ENCODE measurements at regions of chr3 and their contacts with region 1.

Region 1: GRCh38 chr3:98741121-98741716 is 21.9 kb upstream of the ST3GAL6 start:
- DNase-seq: no peak
- ATAC-seq: no peak
- H3K4me3 ChIP-seq: no peak overlapping the region
- H3K27ac ChIP-seq: no peak overlapping the region
- H3K4me1 ChIP-seq: peaks cover 9% of the 10 kb centered on the region
- H3K27me3 ChIP-seq: no peaks in the 10 kb centered on the region
- CTCF ChIP-seq: no peak
- EP300 ChIP-seq: no peak
- POLR2A ChIP-seq: no peak
- RAD21 ChIP-seq: no peak

Region 2: DNA sequence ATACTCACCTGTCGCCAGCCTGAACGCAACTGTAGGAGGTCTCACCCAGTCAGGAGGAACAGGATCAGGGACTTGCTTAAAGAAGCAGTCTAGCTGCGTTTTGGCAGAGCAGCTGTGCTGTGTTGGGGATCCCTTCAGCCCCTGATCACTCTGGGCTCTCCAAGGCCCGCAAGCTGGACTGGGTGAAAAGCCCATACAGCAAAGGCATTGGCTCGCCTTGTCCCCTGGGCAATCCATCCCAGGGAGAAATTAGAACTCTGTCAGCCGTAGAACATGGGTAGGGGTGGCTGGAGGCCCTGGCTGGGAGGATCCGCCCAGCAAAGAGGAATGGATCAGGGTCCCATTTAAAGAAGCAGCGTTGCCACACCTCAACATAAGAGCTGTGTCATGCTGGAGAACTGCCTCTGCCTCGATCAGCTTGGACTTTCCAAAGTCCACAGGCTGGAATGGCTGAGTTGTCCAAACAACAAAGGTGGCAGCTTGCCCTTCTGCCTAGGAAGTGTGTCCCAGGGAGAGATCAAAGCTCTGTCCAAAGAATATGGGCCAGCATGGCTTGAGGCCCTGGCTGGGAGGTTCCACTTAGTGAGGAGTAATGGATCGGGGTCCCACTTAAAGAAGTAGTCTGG is 449.8 kb before region 1 on chr3:
- CTCF ChIA-PET with region 1: no interaction called
- POLR2A ChIA-PET with region 1: no interaction called
- RAD21 ChIA-PET with region 1: no interaction called
- SMC1A ChIA-PET with region 1: no interaction called
- in situ Hi-C with region 1: no loop called
- intact Hi-C with region 1: no loop called
- DNase-seq: no peak
- ATAC-seq: no peak
- H3K4me3 ChIP-seq: no peak overlapping the region
- H3K27ac ChIP-seq: no peak overlapping the region
- H3K4me1 ChIP-seq: no peaks in the 10 kb centered on the region
- H3K27me3 ChIP-seq: no peaks in the 10 kb centered on the region
- CTCF ChIP-seq: no peak
- EP300 ChIP-seq: no peak
- POLR2A ChIP-seq: no peak
- RAD21 ChIP-seq: no peak

Region 3: GRCh38 chr3:98763076-98763475 is 21.9 kb after region 1 on chr3 and contains the start of gene ST3GAL6:
- CTCF ChIA-PET with region 1: interaction called, 5 read pairs
- POLR2A ChIA-PET with region 1: interaction called, 8 read pairs
- RAD21 ChIA-PET with region 1: interaction called, 12 read pairs
- SMC1A ChIA-PET with region 1: interaction called, 139 read pairs
- in situ Hi-C with region 1: no loop called
- intact Hi-C with region 1: no loop called
- DNase-seq: no peak
- ATAC-seq: peak; percentile 67
- H3K4me3 ChIP-seq: peak within 1 kb of the TSS; percentile 35; the same call in 1 of the 2 replicates
- H3K27ac ChIP-seq: peak within 1 kb of the TSS; percentile 5; the same call in 1 of the 2 replicates
- H3K4me1 ChIP-seq: peaks cover 29% of the 10 kb centered on the region
- H3K27me3 ChIP-seq: no peaks in the 10 kb centered on the region
- CTCF ChIP-seq: no peak
- EP300 ChIP-seq: no peak
- POLR2A ChIP-seq: 0 out of 2 replicates have a peak, but pooled peaks have one; percentile 34
- RAD21 ChIP-seq: no peak
- polyA plus RNA-seq, gene ST3GAL6: 19.5 to 31.4 TPM

Region 4: DNA sequence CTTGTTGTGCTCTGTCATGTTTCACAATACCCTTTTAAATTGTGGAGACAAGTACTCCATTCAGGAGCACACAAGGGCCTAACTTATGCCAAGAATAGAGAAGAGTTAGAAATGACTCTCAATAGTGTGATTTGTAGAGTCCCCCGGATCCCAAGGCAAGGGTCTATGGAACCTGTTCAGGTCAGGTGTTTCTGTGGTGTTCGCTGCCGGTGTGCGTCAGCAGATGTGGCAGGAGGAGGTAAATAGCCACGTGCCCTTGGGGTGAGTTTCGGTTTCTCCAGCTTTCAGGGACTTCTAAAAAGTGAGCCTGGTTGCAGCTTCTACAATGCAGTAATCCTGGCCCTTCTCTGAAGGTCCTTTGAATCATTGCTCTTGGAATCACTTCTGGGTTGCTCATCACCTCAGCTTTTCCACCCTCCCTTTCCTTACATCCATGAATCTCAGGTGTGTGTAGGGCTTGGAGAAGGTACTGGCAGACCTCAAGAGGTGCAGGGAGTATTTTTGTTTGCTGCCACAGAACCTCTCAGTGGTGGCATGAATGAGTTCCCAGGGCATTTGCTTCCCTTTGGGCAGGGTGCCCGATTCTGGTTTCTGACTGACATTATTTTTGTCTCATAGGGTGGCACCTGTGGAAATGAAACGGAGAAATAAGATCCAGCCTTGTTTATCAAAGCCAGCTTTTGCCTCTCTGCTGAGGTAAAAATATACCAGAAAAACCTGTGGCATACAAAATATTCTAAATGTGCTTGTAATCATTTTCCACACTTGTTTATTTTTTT is 29.2 kb after region 1 on chr3:
- CTCF ChIA-PET with region 1: interaction called, 5 read pairs
- POLR2A ChIA-PET with region 1: interaction called, 6 read pairs
- RAD21 ChIA-PET with region 1: interaction called, 10 read pairs
- SMC1A ChIA-PET with region 1: interaction called, 29 read pairs
- in situ Hi-C with region 1: no loop called
- intact Hi-C with region 1: no loop called
- DNase-seq: peak; percentile 53
- ATAC-seq: peak; percentile 95
- H3K4me3 ChIP-seq: 0 out of 2 replicates have a peak overlapping the region, but pooled peaks have one; percentile 5
- H3K27ac ChIP-seq: peak overlapping the region; percentile 62
- H3K4me1 ChIP-seq: peaks cover 10% of the 10 kb centered on the region
- H3K27me3 ChIP-seq: no peaks in the 10 kb centered on the region
- CTCF ChIP-seq: no peak
- EP300 ChIP-seq: peak; percentile 68 to 79; a peak in 3 of 4 replicates
- POLR2A ChIP-seq: no peak
- RAD21 ChIP-seq: no peak

Region 5: GRCh38 chr3:98798820-98799219 is 57.6 kb after region 1 on chr3:
- CTCF ChIA-PET with region 1: no interaction called
- POLR2A ChIA-PET with region 1: interaction called, 10 read pairs
- RAD21 ChIA-PET with region 1: no interaction called
- SMC1A ChIA-PET with region 1: interaction called, 4 read pairs
- in situ Hi-C with region 1: no loop called
- intact Hi-C with region 1: no loop called
- DNase-seq: no peak
- ATAC-seq: peak; percentile 51
- H3K4me3 ChIP-seq: no peak overlapping the region
- H3K27ac ChIP-seq: no peak overlapping the region
- H3K4me1 ChIP-seq: no peaks in the 10 kb centered on the region
- H3K27me3 ChIP-seq: no peaks in the 10 kb centered on the region
- CTCF ChIP-seq: peak in 2 of 3 experiments; percentile 2 to 50; a peak in 2 of 6 replicates
- EP300 ChIP-seq: no peak
- POLR2A ChIP-seq: no peak
- RAD21 ChIP-seq: peak; percentile 56

Region 6: DNA sequence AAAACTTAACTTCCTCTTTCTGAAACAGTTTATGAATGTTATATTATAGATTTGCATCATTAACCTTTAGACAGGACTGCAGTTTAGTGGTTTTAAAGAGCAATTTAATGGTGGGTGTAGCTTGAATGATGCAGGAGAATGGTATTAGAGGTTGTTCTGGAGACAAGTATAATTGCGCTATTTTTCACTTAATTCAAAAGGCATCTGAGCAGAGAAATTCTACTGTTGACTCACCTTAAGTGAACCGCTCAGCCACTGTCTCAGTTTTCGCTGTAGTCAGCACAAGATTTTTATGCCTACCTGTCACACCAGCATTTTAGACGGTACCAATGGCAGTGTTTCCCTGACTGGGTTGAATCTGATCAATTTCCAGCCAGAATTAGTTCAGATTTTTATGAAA is 509.1 kb after region 1 on chr3:
- CTCF ChIA-PET with region 1: no interaction called
- POLR2A ChIA-PET with region 1: no interaction called
- RAD21 ChIA-PET with region 1: no interaction called
- SMC1A ChIA-PET with region 1: no interaction called
- in situ Hi-C with region 1: no loop called
- intact Hi-C with region 1: no loop called
- DNase-seq: no peak
- ATAC-seq: no peak
- H3K4me3 ChIP-seq: no peak overlapping the region
- H3K27ac ChIP-seq: no peak overlapping the region
- H3K4me1 ChIP-seq: no peaks in the 10 kb centered on the region
- H3K27me3 ChIP-seq: no peaks in the 10 kb centered on the region
- CTCF ChIP-seq: no peak
- EP300 ChIP-seq: no peak
- POLR2A ChIP-seq: no peak
- RAD21 ChIP-seq: no peak